Transverse colon (tissue), 4 donors: ENCODE measurements at regions of chr7 and their contacts with region 1.

Region 1: GRCh38 chr7:30983042-30983913 is 19.5 kb downstream of the GHRHR start:
- DNase-seq: peak; percentile 80
- H3K4me3 ChIP-seq: no peak overlapping the region
- H3K27ac ChIP-seq: no peak overlapping the region
- H3K4me1 ChIP-seq: peaks cover 0 to 5% (median 0%) of the 10 kb centered on the region in 4 donors
- H3K27me3 ChIP-seq: no peaks in the 10 kb centered on the region
- CTCF ChIP-seq: peak; percentile 74 to 96 (median 93)
- EP300 ChIP-seq: no peak
- POLR2A ChIP-seq: no peak

Region 2: GRCh38 chr7:30681815-30682211 is 301.5 kb before region 1 on chr7:
- in situ Hi-C with region 1: no loop called
- intact Hi-C with region 1: no loop called
- DNase-seq: no peak
- H3K4me3 ChIP-seq: peak overlapping the region; percentile 0 to 52 (median 26)
- H3K27ac ChIP-seq: no peak overlapping the region
- H3K4me1 ChIP-seq: peaks cover 7 to 15% (median 13%) of the 10 kb centered on the region in 4 donors
- H3K27me3 ChIP-seq: peaks cover 75% of the 10 kb centered on the region
- CTCF ChIP-seq: no peak
- EP300 ChIP-seq: no peak
- POLR2A ChIP-seq: no peak

Region 3: DNA sequence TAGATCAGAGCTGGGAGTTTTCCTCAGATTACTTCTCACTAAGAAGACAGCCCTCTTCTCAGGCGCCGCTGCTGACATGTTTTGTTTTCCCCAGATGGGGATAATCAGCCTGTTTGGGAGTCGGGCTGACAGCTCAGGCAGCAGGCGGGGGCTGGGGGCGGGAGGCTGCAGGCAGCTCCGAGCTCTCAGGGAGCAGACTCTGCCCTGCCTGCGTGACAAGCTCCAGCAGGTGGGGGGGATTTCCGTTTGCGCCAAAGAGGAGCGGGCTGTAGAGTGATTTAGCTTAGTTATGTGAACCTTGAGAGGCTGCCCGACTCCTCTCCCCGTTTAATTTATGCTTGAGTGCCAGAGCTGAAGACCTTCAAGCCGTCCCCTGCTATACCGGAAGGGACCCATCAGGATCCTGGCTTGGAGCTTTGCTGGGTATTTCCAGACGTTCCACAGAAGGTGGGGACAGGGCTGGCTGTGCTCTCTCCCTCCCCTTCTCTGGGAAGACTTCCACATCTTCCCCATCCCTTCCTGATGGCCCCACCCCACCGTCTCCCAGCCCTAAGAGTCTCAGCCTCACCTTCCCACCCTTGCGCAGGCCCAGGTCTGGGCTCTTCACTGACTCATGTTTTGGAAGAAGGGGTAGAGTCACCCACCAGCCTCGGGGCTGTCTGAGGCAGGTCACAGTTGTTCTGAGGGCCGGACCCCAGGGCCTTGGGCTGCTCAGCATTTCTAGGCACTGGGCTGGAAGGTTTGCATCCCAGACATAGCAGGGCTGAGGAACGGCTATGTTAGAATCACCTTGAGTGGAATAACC is 44.1 kb after region 1 on chr7:
- in situ Hi-C with region 1: no loop called
- intact Hi-C with region 1: no loop called
- DNase-seq: peak; percentile 16
- H3K4me3 ChIP-seq: no peak overlapping the region
- H3K27ac ChIP-seq: peak overlapping the region in 2 of 4 donors; percentile 6 to 37
- H3K4me1 ChIP-seq: peaks cover 0 to 7% (median 0%) of the 10 kb centered on the region in 4 donors
- H3K27me3 ChIP-seq: no peaks in the 10 kb centered on the region
- CTCF ChIP-seq: no peak
- EP300 ChIP-seq: no peak
- POLR2A ChIP-seq: no peak

Region 4: GRCh38 chr7:31122649-31123058 is 139.4 kb after region 1 on chr7:
- in situ Hi-C with region 1: loop called (anchors 5 to 10 kb)
- intact Hi-C with region 1: loop called (anchors 5 kb)
- DNase-seq: peak; percentile 49
- H3K4me3 ChIP-seq: no peak overlapping the region
- H3K27ac ChIP-seq: no peak overlapping the region
- H3K4me1 ChIP-seq: no peaks in the 10 kb centered on the region
- H3K27me3 ChIP-seq: no peaks in the 10 kb centered on the region
- CTCF ChIP-seq: peak; percentile 66 to 81 (median 69)
- EP300 ChIP-seq: no peak
- POLR2A ChIP-seq: no peak

Region 5: DNA sequence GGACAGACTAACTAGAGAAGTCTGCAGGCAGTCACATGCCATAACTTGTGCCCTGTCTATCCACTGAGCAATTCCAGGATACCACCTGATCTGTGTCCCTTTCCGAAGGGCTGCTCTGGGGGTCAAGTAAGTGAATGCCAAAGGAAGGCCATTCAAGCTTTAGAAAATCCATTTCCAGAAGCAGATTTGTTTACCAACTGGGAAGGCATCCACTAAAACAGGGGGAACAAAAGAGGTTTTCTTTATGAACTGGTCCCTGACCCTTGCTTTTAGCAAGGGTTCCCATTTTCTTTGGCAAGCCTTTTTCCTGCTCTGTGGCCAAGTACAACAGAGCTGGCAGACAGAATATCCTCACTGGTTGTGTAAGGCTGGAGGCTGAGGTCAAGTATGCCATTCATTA is 567.2 kb after region 1 on chr7:
- in situ Hi-C with region 1: no loop called
- intact Hi-C with region 1: no loop called
- DNase-seq: no peak
- H3K4me3 ChIP-seq: no peak overlapping the region
- H3K27ac ChIP-seq: no peak overlapping the region
- H3K4me1 ChIP-seq: no peaks in the 10 kb centered on the region
- H3K27me3 ChIP-seq: no peaks in the 10 kb centered on the region
- CTCF ChIP-seq: no peak
- EP300 ChIP-seq: no peak
- POLR2A ChIP-seq: no peak